PC-3 (cell line): ENCODE measurements at regions of chrX and their contacts with region 1.

Region 1: GRCh38 chrX:135931644-135932487 is 38.4 kb downstream of the SAGE1 start:
- DNase-seq: peak; percentile 64
- ATAC-seq: peak; percentile 75; the same call in 1 of the 2 replicates
- H3K4me3 ChIP-seq: no peak overlapping the region
- H3K27ac ChIP-seq: no peak overlapping the region
- H3K4me1 ChIP-seq: no peaks in the 10 kb centered on the region
- H3K27me3 ChIP-seq: no peaks in the 10 kb centered on the region
- CTCF ChIP-seq: peak; percentile 56

Region 2: GRCh38 chrX:135625995-135626394 is 305.9 kb before region 1 on chrX:
- CTCF ChIA-PET with region 1: no interaction called
- POLR2A ChIA-PET with region 1: no interaction called
- intact Hi-C with region 1: loop called (anchors 5 kb)
- DNase-seq: peak; percentile 39
- ATAC-seq: peak; percentile 49; the same call in 1 of the 2 replicates
- H3K4me3 ChIP-seq: no peak overlapping the region
- H3K27ac ChIP-seq: no peak overlapping the region
- H3K4me1 ChIP-seq: no peaks in the 10 kb centered on the region
- H3K27me3 ChIP-seq: no peaks in the 10 kb centered on the region
- CTCF ChIP-seq: peak; percentile 37; the same call in 1 of the 2 replicates